Aorta (tissue), 5 donors: ENCODE measurements at regions of chr6 and their contacts with region 1.

Region 1: DNA sequence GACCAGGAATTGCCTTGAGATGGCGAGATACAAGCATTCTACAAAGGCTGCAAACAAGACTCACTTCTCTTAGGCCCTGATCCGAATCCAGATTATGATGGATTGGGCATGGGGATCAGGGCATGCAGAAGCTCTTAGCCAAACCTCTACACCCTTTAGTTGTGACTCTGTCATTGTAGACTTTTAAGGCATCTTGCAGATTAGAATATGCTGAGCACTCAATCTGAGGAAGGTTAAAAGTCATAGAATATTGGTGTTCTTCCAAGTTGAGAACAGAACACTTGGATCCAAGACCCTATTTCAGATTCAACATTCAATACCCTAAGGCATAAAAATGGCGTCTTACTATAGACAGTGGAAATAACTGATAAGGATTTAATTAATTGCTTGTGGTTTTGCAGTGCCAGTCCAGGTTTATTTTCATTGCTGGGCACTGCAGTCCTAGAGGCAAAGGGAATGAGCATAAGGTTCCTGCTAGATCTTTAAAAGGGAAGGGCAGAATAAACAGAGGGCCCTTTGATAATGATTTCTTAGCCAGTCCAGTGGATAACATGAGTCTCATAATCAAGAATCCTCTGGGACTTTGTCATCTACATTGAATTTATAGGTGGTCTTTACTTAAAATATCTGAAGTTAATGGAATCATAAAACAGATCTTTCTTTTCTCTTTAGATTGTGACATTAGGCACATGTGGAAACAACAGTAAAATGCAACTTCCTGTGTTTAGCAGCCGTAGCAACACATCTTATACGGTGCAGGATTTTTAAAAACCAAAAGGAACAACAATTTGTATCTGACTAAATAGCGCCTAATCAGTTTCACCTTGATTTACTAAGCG is 17.6 kb downstream of the PHACTR2 start:
- DNase-seq: no peak
- ATAC-seq: no peak
- H3K4me3 ChIP-seq: no peak overlapping the region
- H3K27ac ChIP-seq: peak overlapping the region; percentile 22 to 71
- H3K4me1 ChIP-seq: peaks cover 3 to 7% of the 10 kb centered on the region in 2 donors
- H3K27me3 ChIP-seq: no peaks in the 10 kb centered on the region

Region 2: GRCh38 chr6:143745166-143746133 is 50.1 kb after region 1 on chr6:
- intact Hi-C with region 1: loop called (anchors 5 kb)
- DNase-seq: no peak
- ATAC-seq: peak; percentile 12
- H3K4me3 ChIP-seq: peak overlapping the region in 1 of 2 donors; percentile 54
- H3K27ac ChIP-seq: peak overlapping the region; percentile 90 to 99
- H3K4me1 ChIP-seq: peaks cover 0 to 13% of the 10 kb centered on the region in 2 donors
- H3K27me3 ChIP-seq: no peaks in the 10 kb centered on the region